Activated CD4-positive, alpha-beta T cell treated with anti-CD3 and anti-CD28 coated beads for 36 hours (primary cell): ENCODE measurements at regions of chr15 and their contacts with region 1.

Region 1: GRCh38 chr15:62711691-62712454 is 330.7 kb upstream of the TPM1 start:
- DNase-seq: peak; percentile 50
- ATAC-seq: peak; percentile 98
- H3K4me3 Mint-ChIP-seq: no peak overlapping the region
- H3K27ac Mint-ChIP-seq: peak overlapping the region; percentile 69
- H3K4me1 Mint-ChIP-seq: peaks cover 14% of the 10 kb centered on the region
- H3K27me3 Mint-ChIP-seq: peaks cover 5% of the 10 kb centered on the region

Region 2: DNA sequence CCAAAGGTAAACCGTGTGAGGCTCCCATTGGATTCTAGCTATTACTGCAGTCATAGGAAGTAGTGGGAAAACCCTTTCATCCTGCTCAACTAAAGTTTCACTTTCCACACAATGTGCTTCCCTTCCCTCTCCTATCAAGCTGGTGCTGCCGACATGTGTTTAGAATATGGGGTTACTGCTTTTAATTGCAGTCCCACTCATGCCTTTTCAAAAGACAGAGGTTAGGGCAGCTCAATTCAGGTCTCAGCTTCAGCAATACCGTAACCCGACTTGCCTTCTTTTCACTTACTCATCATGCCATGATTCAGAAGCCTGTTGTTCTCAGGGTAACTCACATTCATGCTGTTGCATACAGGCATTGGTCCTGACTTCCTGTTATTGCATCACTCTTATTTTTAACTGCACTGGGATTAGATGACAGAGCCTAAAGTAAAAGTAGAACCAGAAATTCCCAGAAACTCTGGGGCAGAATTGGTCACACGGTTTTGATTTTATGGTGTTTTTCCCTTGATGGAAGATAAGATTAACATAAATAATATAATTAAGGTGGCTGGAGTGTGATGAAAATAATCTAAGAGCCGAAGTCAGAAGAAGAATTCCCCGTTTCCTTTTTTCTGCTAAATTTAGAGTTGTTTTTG is 592.5 kb before region 1 on chr15:
- CTCF ChIA-PET with region 1: no interaction called
- POLR2A ChIA-PET with region 1: no interaction called
- intact Hi-C with region 1: loop called in 1 of 2 experiments (anchors 10 kb)
- DNase-seq: peak; percentile 46
- ATAC-seq: peak; percentile 99
- H3K4me3 Mint-ChIP-seq: peak overlapping the region; percentile 17
- H3K27ac Mint-ChIP-seq: peak overlapping the region; percentile 94
- H3K4me1 Mint-ChIP-seq: peaks cover 48% of the 10 kb centered on the region
- H3K27me3 Mint-ChIP-seq: no peaks in the 10 kb centered on the region

Region 3: GRCh38 chr15:62444104-62445022 is 267.5 kb before region 1 on chr15:
- CTCF ChIA-PET with region 1: no interaction called
- POLR2A ChIA-PET with region 1: no interaction called
- intact Hi-C with region 1: no loop called
- DNase-seq: peak; percentile 14
- ATAC-seq: peak; percentile 49
- H3K4me3 Mint-ChIP-seq: no peak overlapping the region
- H3K27ac Mint-ChIP-seq: no peak overlapping the region
- H3K4me1 Mint-ChIP-seq: no peaks in the 10 kb centered on the region
- H3K27me3 Mint-ChIP-seq: no peaks in the 10 kb centered on the region

Region 4: DNA sequence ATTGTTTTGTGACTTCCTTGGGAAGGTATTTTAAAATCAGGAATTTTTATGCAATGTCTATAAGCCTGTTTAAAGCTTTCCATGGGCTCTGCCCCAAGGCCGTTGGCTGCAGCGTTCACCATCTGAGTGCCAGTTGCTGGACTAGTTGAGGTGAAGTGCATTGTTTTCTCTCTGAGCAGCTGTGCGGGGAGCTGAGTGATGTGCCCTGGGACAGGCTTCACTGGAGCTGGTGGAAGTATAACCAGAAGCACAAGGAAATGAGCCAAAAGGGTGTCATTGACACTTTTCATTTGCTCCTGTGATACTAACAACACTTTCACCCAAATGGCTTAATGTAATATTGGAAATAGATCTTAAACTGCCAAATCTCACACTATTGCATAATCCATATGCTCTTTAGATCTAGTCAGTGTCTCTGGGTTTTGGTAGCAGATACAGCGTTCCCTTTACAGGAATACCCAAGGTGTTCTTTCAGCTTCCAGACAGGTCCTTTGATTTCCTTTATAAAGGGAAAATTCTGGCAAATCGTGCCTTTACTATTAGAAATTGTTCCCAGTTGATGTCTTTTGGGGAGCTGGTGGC is 594.7 kb after region 1 on chr15:
- CTCF ChIA-PET with region 1: no interaction called
- POLR2A ChIA-PET with region 1: no interaction called
- intact Hi-C with region 1: no loop called
- DNase-seq: no peak
- ATAC-seq: no peak
- H3K4me3 Mint-ChIP-seq: no peak overlapping the region
- H3K27ac Mint-ChIP-seq: no peak overlapping the region
- H3K4me1 Mint-ChIP-seq: no peaks in the 10 kb centered on the region
- H3K27me3 Mint-ChIP-seq: no peaks in the 10 kb centered on the region